Caco-2 (cell line): ENCODE measurements at regions of chr14 and their contacts with region 1.

Region 1: DNA sequence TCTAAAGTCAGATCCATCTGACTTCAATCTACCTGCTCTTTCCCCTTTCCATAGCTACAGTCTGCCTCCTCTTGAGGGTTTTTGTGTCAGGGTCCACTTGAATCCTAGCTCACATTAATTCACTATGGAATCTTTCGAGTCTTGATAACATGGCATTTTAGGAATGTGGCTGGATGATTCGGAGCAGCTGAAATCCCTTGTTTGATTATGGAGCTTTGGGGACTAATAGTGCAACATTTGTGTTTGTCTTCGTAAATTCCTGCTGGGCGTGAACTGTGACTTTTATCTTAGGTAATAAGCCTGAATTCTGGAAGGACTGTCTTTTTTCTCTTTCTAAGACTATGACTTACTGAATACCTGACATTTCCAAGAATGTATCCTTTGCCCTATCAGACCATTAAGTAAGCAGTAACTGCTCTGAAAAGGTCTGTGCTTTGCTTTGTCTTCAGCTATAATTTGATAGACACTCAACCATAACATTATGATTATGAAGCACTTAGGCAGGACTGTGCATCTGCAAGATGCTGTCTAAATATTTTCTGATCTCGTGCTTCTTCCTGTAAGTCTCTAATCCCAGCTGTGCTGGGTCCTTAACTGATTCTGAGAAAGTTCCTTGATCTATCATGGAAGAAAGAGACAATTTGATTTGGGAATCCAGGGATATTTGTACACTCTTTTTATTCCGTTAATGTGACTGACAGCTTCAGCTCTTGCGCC is 19.0 kb upstream of the PELI2 start:
- DNase-seq: peak; percentile 74 to 75
- H3K4me3 ChIP-seq: no peak overlapping the region
- H3K4me3 Mint-ChIP-seq: peak overlapping the region; percentile 36
- H3K27ac Mint-ChIP-seq: peak overlapping the region; percentile 80
- H3K4me1 ChIP-seq: peaks cover 52% of the 10 kb centered on the region
- H3K4me1 Mint-ChIP-seq: peaks cover 34% of the 10 kb centered on the region
- H3K27me3 ChIP-seq: no peaks in the 10 kb centered on the region
- H3K27me3 Mint-ChIP-seq: no peaks in the 10 kb centered on the region
- CTCF ChIP-seq: no peak

Region 2: DNA sequence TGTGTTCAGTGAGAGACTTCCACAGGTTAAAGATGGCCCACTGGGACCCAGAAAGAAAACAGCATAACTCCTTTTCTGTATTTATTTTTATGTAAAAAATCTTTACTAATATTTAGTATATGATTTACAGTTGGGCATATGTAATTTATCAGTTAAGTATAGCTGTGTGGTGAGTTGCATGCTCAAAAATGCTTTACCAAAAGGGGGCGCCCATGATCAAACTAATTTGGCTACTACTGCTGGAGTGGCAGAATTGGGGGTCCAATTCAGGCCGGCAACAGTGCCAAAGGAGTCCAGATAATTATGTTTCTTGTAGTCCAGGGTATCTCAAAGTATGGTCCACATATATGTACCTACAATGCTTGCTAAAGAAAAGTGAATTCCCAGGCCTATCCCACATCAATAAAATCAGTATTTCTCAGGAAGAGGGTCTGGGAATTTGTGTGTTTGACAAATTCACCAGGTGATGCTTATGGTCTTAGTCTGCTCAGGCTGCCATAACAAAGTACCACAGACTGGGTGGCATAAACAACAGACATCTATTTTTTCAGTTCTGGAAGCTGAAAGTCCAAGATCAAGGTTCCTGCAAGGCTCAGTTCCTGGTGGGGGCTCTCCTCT is 367.2 kb before region 1 on chr14:
- CTCF ChIA-PET with region 1: no interaction called
- POLR2A ChIA-PET with region 1: no interaction called
- intact Hi-C with region 1: loop called (anchors 5 kb)
- DNase-seq: peak in 1 of 2 experiments; percentile 45
- H3K4me3 ChIP-seq: no peak overlapping the region
- H3K4me3 Mint-ChIP-seq: no peak overlapping the region
- H3K27ac Mint-ChIP-seq: no peak overlapping the region
- H3K4me1 ChIP-seq: no peaks in the 10 kb centered on the region
- H3K4me1 Mint-ChIP-seq: peaks cover 15% of the 10 kb centered on the region
- H3K27me3 ChIP-seq: no peaks in the 10 kb centered on the region
- H3K27me3 Mint-ChIP-seq: no peaks in the 10 kb centered on the region
- CTCF ChIP-seq: peak; percentile 52 to 64

Region 3: GRCh38 chr14:55846826-55847446 is 252.3 kb before region 1 on chr14:
- CTCF ChIA-PET with region 1: no interaction called
- POLR2A ChIA-PET with region 1: no interaction called
- intact Hi-C with region 1: no loop called
- DNase-seq: no peak
- H3K4me3 ChIP-seq: no peak overlapping the region
- H3K4me3 Mint-ChIP-seq: no peak overlapping the region
- H3K27ac Mint-ChIP-seq: no peak overlapping the region
- H3K4me1 ChIP-seq: no peaks in the 10 kb centered on the region
- H3K4me1 Mint-ChIP-seq: no peaks in the 10 kb centered on the region
- H3K27me3 ChIP-seq: no peaks in the 10 kb centered on the region
- H3K27me3 Mint-ChIP-seq: no peaks in the 10 kb centered on the region
- CTCF ChIP-seq: no peak

Region 4: DNA sequence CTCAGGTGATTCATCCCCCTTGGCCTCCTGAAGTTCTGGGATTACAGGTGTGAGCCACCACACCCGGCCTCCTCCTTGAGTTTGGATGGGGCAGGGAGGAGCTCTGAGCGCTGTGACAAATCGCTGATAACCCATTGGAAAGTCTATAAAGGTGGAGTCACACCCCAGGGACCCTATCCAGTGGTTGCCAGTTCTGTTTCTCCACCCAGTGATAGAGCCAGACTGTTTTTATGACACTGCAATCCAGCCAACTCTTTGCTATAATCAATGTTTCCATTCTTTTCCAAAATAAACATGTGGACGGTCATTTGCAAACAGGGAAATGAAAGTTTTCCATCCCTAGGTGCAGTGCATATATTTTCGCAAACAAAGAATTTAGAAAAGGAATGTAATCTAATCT is 123.0 kb before region 1 on chr14:
- CTCF ChIA-PET with region 1: no interaction called
- POLR2A ChIA-PET with region 1: no interaction called
- intact Hi-C with region 1: no loop called
- DNase-seq: no peak
- H3K4me3 ChIP-seq: no peak overlapping the region
- H3K4me3 Mint-ChIP-seq: no peak overlapping the region
- H3K27ac Mint-ChIP-seq: no peak overlapping the region
- H3K4me1 ChIP-seq: no peaks in the 10 kb centered on the region
- H3K4me1 Mint-ChIP-seq: no peaks in the 10 kb centered on the region
- H3K27me3 ChIP-seq: no peaks in the 10 kb centered on the region
- H3K27me3 Mint-ChIP-seq: no peaks in the 10 kb centered on the region
- CTCF ChIP-seq: no peak

Region 5: DNA sequence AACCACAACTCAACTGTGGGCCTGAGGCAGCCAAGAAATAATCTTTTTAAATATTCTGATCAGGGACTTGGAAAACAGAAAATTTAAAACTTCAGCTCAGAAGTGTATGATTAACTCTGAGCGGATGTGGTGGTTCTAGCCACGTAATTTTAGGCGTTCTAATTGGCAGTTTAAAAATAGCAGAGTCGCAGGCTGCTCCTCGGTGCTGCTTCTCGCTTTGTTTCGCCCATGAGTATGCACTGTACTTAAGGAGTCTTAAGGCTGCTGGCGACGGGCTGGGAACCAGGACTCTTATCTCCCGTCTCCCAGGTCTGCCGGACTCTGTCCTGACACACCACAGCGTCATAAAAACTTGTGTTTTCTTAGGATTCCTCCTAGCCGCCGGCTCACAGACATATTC is 94.5 kb before region 1 on chr14:
- CTCF ChIA-PET with region 1: interaction called, 5 read pairs
- POLR2A ChIA-PET with region 1: no interaction called
- intact Hi-C with region 1: loop called (anchors 1 kb)
- DNase-seq: peak; percentile 62 to 77
- H3K4me3 ChIP-seq: 0 out of 2 replicates have a peak overlapping the region, but pooled peaks have one; percentile 8
- H3K4me3 Mint-ChIP-seq: peak overlapping the region; percentile 74
- H3K27ac Mint-ChIP-seq: peak overlapping the region; percentile 95
- H3K4me1 ChIP-seq: peaks cover 35% of the 10 kb centered on the region
- H3K4me1 Mint-ChIP-seq: peaks cover 15% of the 10 kb centered on the region
- H3K27me3 ChIP-seq: no peaks in the 10 kb centered on the region
- H3K27me3 Mint-ChIP-seq: no peaks in the 10 kb centered on the region
- CTCF ChIP-seq: no peak

Region 6: DNA sequence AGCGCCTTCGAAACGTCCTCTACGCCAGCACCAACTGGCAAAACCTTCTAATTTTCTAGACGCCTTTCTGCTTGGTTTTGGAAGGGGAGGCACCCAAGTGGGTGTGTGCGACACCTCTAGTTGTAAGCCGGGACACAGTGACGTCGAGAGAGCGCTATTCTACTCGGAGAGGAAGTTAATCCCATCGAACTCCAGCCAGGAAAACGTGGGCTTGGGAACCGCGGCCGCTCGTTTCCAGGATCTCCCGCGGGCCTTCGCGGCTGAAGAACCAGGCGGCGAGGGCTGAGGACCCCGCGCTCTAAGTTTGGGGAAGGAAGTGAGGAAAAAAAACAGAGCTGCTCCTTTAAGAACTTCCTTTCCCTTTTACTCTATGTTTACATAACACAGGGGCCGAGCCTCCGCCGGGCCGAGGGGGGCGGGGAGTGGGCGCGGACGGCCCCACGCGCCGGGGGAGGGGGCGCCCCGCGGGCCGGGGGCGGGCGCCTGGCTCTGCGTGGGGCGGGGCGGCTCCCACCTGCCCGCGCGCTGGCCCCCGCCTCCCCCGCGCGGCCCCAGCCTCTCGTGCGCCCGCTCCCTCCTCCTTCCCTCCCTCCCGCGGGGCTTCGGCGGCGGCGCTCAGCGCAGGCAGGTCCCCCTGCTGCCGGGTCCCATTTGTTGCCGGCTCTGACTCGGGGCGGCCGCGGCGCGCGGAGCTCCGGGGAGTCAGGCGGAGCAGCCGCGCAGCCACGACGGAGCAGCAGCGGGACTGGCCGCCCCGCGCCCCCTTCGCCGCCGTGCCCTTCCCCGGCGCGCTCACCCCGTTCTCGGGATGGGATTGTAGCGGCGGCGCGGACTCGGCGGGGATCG is 18.7 kb after region 1 on chr14 and contains the start of gene PELI2:
- CTCF ChIA-PET with region 1: interaction called, 4 read pairs
- POLR2A ChIA-PET with region 1: no interaction called
- intact Hi-C with region 1: loop called (anchors 1 kb)
- DNase-seq: peak; percentile 67 to 85
- H3K4me3 ChIP-seq: peak within 1 kb of the TSS; percentile 49
- H3K4me3 Mint-ChIP-seq: peak within 1 kb of the TSS; percentile 96
- H3K27ac Mint-ChIP-seq: no peak within 1 kb of the TSS
- H3K4me1 ChIP-seq: peaks cover 10% of the 10 kb centered on the region; the same call in 1 of the 2 replicates
- H3K4me1 Mint-ChIP-seq: peaks cover 24% of the 10 kb centered on the region
- H3K27me3 ChIP-seq: no peaks in the 10 kb centered on the region
- H3K27me3 Mint-ChIP-seq: peaks cover 11% of the 10 kb centered on the region
- CTCF ChIP-seq: peak in 1 of 2 experiments; percentile 19
- total RNA-seq, gene PELI2: 8.1 and 8.5 TPM in 2 replicates

Region 7: GRCh38 chr14:56145965-56146364 is 46.7 kb after region 1 on chr14:
- CTCF ChIA-PET with region 1: no interaction called
- POLR2A ChIA-PET with region 1: no interaction called
- intact Hi-C with region 1: no loop called
- DNase-seq: no peak
- H3K4me3 ChIP-seq: no peak overlapping the region
- H3K4me3 Mint-ChIP-seq: no peak overlapping the region
- H3K27ac Mint-ChIP-seq: no peak overlapping the region
- H3K4me1 ChIP-seq: no peaks in the 10 kb centered on the region
- H3K4me1 Mint-ChIP-seq: no peaks in the 10 kb centered on the region
- H3K27me3 ChIP-seq: no peaks in the 10 kb centered on the region
- H3K27me3 Mint-ChIP-seq: no peaks in the 10 kb centered on the region
- CTCF ChIP-seq: no peak